GM12878 (cell line): ENCODE measurements at regions of chr6 and their contacts with region 1.

Region 1: GRCh38 chr6:30600451-30600961 is 16.5 kb downstream of the PPP1R10 start:
- DNase-seq: no peak
- ATAC-seq: no peak
- H3K4me3 ChIP-seq: no peak overlapping the region
- H3K27ac ChIP-seq: no peak overlapping the region
- H3K4me1 ChIP-seq: no peaks in the 10 kb centered on the region; the same call in 1 of the 2 replicates
- H3K27me3 ChIP-seq: no peaks in the 10 kb centered on the region
- CTCF ChIP-seq: no peak
- EP300 ChIP-seq: no peak
- POLR2A ChIP-seq: peak; percentile 47; the same call in 1 of the 2 replicates
- RAD21 ChIP-seq: no peak

Region 2: DNA sequence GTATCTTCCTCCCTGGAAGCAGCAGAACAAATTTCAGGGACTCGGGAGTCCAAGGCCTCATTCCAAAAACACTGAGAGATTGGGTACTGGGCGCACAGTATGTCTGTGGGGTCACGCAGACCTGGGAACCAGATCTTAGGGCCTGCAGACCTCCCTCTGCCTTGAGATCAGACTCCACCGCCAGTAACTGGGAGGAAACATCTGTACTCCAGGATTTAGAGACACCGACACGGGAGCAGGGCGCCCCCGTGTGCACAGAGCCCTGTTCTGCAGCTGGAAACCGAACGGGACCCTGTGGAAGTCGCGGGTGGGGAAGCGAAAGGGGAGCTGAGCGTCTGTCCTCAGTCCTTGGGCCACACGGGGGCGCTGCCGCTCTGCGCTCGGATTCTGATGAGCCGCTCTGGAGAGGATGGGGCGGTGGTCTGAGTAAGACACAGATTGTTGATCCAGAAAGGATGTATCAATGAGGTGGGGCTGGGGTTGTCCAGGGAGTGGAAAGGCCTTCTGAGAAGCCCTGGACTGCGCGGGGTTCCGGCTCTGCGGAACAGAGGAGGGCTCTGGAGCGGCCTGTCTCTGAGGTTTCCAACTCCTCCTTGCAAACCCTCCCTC is 146.9 kb before region 1 on chr6:
- CTCF ChIA-PET with region 1: interaction called, 17 read pairs
- POLR2A ChIA-PET with region 1: no interaction called
- RAD21 ChIA-PET with region 1: interaction called, 4 read pairs
- SMC1A ChIA-PET with region 1: interaction called, 4 read pairs
- in situ Hi-C with region 1: no loop called
- intact Hi-C with region 1: no loop called
- DNase-seq: no peak
- ATAC-seq: peak; percentile 94
- H3K4me3 ChIP-seq: no peak overlapping the region
- H3K27ac ChIP-seq: no peak overlapping the region
- H3K4me1 ChIP-seq: peaks cover 18% of the 10 kb centered on the region
- H3K27me3 ChIP-seq: peaks cover 13 to 23% of the 10 kb centered on the region in 2 experiments
- CTCF ChIP-seq: peak; percentile 54 to 78 (median 65)
- EP300 ChIP-seq: no peak
- POLR2A ChIP-seq: no peak
- RAD21 ChIP-seq: peak; percentile 53

Region 3: GRCh38 chr6:30533460-30534294 is 66.8 kb before region 1 on chr6:
- CTCF ChIA-PET with region 1: interaction called, 11 read pairs
- POLR2A ChIA-PET with region 1: no interaction called
- RAD21 ChIA-PET with region 1: interaction called, 4 read pairs
- SMC1A ChIA-PET with region 1: interaction called, 5 read pairs
- in situ Hi-C with region 1: no loop called
- intact Hi-C with region 1: no loop called
- DNase-seq: no peak
- ATAC-seq: peak; percentile 46
- H3K4me3 ChIP-seq: 0 out of 2 replicates have a peak overlapping the region, but pooled peaks have one; percentile 5
- H3K27ac ChIP-seq: no peak overlapping the region
- H3K4me1 ChIP-seq: peaks cover 25% of the 10 kb centered on the region
- H3K27me3 ChIP-seq: no peaks in the 10 kb centered on the region
- CTCF ChIP-seq: no peak
- EP300 ChIP-seq: no peak
- POLR2A ChIP-seq: no peak
- RAD21 ChIP-seq: no peak

Region 4: GRCh38 chr6:30571075-30571768 is 29.3 kb before region 1 on chr6 and contains the start of gene ABCF1:
- CTCF ChIA-PET with region 1: interaction called, 11 read pairs
- POLR2A ChIA-PET with region 1: interaction called, 7 read pairs
- RAD21 ChIA-PET with region 1: interaction called, 3 read pairs
- SMC1A ChIA-PET with region 1: interaction called, 10 read pairs
- in situ Hi-C with region 1: no loop called
- intact Hi-C with region 1: no loop called
- DNase-seq: peak; percentile 85
- ATAC-seq: peak; percentile 94
- H3K4me3 ChIP-seq: peak within 1 kb of the TSS; percentile 89
- H3K27ac ChIP-seq: peak within 1 kb of the TSS; percentile 94
- H3K4me1 ChIP-seq: peaks cover 15% of the 10 kb centered on the region
- H3K27me3 ChIP-seq: no peaks in the 10 kb centered on the region
- CTCF ChIP-seq: no peak
- EP300 ChIP-seq: 0 out of 4 replicates have a peak, but pooled peaks of 1 of the 2 experiments have one; percentile 23
- POLR2A ChIP-seq: peak; percentile 96
- RAD21 ChIP-seq: no peak
- polyA plus RNA-seq, gene ABCF1: 21.3 to 26.1 TPM

Region 5: GRCh38 chr6:30646458-30647241 is 46.1 kb after region 1 on chr6 and contains the start of gene C6orf136:
- CTCF ChIA-PET with region 1: no interaction called
- POLR2A ChIA-PET with region 1: interaction called, 10 read pairs
- RAD21 ChIA-PET with region 1: no interaction called
- SMC1A ChIA-PET with region 1: no interaction called
- in situ Hi-C with region 1: no loop called
- intact Hi-C with region 1: no loop called
- DNase-seq: peak; percentile 75
- ATAC-seq: peak; percentile 88
- H3K4me3 ChIP-seq: peak within 1 kb of the TSS; percentile 77
- H3K27ac ChIP-seq: peak within 1 kb of the TSS; percentile 87
- H3K4me1 ChIP-seq: peaks cover 2% of the 10 kb centered on the region; the same call in 1 of the 2 replicates
- H3K27me3 ChIP-seq: no peaks in the 10 kb centered on the region
- CTCF ChIP-seq: no peak
- EP300 ChIP-seq: no peak
- POLR2A ChIP-seq: no peak
- RAD21 ChIP-seq: no peak
- polyA plus RNA-seq, gene C6orf136: 10.0 to 14.6 TPM